Calu3 (cell line): ENCODE measurements at regions of chr7 and their contacts with region 1.

Region 1: DNA sequence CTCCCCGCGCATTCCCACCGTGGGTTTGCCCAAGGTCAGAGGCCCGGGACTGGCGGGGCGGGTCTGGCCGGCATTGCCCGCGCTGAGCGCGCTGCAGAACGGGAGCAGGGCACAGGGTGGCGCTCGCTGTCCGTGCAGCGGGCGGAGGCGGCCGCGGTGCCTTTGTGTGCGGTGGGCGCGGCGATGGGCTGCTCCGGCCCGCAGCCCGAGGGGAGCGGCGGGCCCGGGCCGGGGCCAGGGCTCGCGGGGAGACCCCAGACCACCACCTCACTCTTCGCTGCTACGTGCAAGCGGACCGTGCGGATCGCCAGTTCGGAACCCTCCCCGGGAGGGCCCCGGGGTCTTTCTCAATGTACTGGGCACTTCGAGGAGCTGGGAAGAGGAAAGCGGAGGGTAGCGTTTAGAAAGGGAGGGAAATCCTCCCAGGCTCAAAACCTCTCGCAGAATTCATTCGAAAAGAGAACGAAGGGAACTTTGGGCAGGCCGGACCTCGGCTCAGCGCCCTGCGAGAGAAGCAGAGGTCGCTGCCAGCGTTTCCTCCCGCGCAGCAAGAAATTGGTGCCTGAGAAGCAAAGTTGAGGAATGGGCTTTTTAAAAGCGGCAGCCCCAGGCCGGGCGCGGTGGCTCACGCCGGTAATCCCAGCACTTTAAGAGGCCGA is 8.5 kb downstream of the SP8 start:
- DNase-seq: peak; percentile 79
- H3K4me3 Mint-ChIP-seq: peak overlapping the region; percentile 71
- H3K27ac Mint-ChIP-seq: no peak overlapping the region
- H3K4me1 Mint-ChIP-seq: peaks cover 14% of the 10 kb centered on the region
- H3K27me3 Mint-ChIP-seq: peaks cover 79% of the 10 kb centered on the region
- CTCF ChIP-seq: peak; percentile 97

Region 2: DNA sequence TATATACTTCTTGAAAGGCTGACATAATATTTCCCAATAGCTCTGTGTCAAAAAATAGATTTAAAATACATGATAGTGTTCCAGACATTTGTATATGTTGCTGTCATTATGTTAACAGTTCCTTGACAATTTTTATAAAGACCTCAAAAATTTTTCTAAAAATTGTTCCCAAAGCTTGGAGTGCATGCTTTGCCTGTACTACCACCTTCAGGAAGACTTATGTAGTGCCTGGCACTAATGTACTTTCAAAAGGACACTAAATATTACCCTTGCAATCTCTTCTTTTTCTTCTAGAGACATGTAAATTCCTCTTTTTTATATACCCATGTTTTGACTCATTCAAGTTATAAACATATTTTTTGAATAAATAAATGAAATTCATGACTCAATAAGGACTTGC is 56.5 kb after region 1 on chr7:
- CTCF ChIA-PET with region 1: no interaction called
- intact Hi-C with region 1: loop called (anchors 5 kb)
- DNase-seq: no peak
- H3K4me3 Mint-ChIP-seq: no peak overlapping the region
- H3K27ac Mint-ChIP-seq: no peak overlapping the region
- H3K4me1 Mint-ChIP-seq: no peaks in the 10 kb centered on the region
- H3K27me3 Mint-ChIP-seq: peaks cover 48% of the 10 kb centered on the region
- CTCF ChIP-seq: peak; percentile 56

Region 3: GRCh38 chr7:21514062-21514461 is 735.9 kb after region 1 on chr7:
- CTCF ChIA-PET with region 1: no interaction called
- intact Hi-C with region 1: loop called (anchors 5 kb)
- DNase-seq: no peak
- H3K4me3 Mint-ChIP-seq: no peak overlapping the region
- H3K27ac Mint-ChIP-seq: no peak overlapping the region
- H3K4me1 Mint-ChIP-seq: peaks cover 8% of the 10 kb centered on the region
- H3K27me3 Mint-ChIP-seq: no peaks in the 10 kb centered on the region
- CTCF ChIP-seq: no peak